ENCODE measurements at regions of chr15 and their contacts with region 1.

Region 1: DNA sequence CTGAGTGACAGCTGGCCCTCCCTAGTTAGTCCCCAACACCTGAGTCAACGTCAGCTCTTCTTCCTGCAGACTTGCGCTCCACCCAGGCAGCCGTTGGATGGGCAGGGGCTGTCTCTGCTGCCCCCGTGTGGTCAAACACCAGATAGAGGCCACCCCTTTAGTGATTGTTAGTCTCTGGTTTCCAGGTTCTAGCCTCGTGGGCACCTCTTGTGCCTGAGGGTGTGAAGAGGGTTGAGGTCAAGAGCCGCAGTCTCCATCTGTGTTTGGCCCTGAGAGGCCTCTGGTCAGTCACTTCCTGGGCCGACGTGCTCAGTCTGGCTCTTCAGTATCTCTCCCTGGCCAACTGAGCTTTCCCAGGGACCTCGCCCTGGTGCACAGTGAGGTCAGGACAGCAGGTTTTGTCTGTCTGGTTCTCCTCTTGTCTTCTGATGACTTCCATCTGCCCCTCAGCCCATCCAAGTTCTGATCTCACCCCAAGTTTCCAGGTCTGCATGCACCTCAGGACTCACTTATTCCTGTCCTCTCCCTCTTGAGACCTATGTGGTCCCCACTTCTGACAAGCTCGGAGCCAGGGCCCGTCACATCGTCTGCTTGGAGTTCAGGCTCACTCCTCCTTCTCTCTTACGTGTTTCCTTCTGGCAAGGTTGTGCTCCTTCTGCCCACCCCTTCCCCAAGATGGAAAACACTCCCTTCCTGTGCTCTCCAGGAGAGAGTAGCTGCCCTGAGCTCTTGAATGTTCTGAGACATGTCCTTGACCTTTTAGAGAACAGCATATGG is 20.9 kb downstream of the CD276 start:
- DNase-seq: peak; percentile 80
- CTCF ChIP-seq: peak; percentile 81

Region 2: GRCh38 chr15:73560501-73561117 is 144.4 kb before region 1 on chr15:
- CTCF ChIA-PET with region 1: interaction called, 49 read pairs
- POLR2A ChIA-PET with region 1: no interaction called
- DNase-seq: no peak
- CTCF ChIP-seq: peak; percentile 29

Region 3: GRCh38 chr15:73596174-73596573 is 108.9 kb before region 1 on chr15:
- CTCF ChIA-PET with region 1: interaction called, 13 read pairs
- POLR2A ChIA-PET with region 1: no interaction called
- DNase-seq: no peak
- CTCF ChIP-seq: no peak

Region 4: DNA sequence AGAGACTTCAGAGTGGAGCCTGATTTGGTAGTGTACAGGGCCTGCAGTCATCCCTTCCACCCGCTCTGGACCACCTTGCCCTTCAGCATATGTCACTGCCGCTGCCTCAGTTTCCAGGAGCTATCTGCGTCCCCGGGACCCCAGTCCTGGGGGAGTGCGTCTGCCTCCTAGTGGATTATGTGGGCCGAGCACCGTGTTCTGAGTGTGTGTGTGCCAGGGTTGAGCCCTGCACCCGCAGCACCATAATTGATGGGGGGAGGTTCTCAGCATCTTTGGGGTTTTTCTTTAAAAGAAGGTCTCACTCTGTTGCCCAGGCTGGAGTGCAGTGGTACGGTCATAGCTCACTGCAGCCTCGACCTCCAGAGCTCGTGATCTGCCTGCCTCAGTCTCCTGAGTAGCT is 12.7 kb after region 1 on chr15:
- CTCF ChIA-PET with region 1: interaction called, 11 read pairs
- POLR2A ChIA-PET with region 1: no interaction called
- DNase-seq: no peak
- CTCF ChIP-seq: no peak

Region 5: DNA sequence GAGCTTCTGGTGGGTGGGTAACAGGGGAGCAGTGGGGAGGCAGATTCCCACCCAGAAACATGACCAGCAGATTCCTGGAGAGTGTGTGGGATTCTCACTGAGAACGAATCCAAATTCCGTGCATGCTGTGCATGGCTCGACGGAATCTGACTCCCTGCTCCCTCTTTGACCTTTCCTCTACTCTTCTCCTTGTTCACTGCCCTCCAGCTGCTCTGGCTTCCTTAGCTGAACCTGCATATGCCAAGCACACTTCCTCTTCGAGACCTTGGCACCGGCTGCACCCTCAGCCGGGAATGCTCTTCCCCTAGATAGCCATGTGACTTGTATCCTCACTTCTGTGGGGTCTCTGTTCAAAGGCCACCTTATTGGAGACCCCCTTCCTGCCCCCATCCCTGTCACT is 41.8 kb after region 1 on chr15:
- CTCF ChIA-PET with region 1: no interaction called
- POLR2A ChIA-PET with region 1: no interaction called
- DNase-seq: no peak
- CTCF ChIP-seq: no peak

Measured in GM10248 (cell line).